MCF 10A (cell line): ENCODE measurements at regions of chr5 and their contacts with region 1.

Region 1: GRCh38 chr5:147635882-147636728 is 126.2 kb upstream of the DPYSL3 start:
- DNase-seq: no peak
- H3K4me3 Mint-ChIP-seq: no peak overlapping the region
- H3K27ac Mint-ChIP-seq: no peak overlapping the region
- H3K4me1 Mint-ChIP-seq: no peaks in the 10 kb centered on the region
- H3K27me3 Mint-ChIP-seq: no peaks in the 10 kb centered on the region
- CTCF ChIP-seq: no peak

Region 2: GRCh38 chr5:147658293-147658932 is 22.3 kb after region 1 on chr5:
- CTCF ChIA-PET with region 1: interaction called, 10 read pairs
- POLR2A ChIA-PET with region 1: no interaction called
- intact Hi-C with region 1: no loop called
- DNase-seq: no peak
- H3K4me3 Mint-ChIP-seq: no peak overlapping the region
- H3K27ac Mint-ChIP-seq: no peak overlapping the region
- H3K4me1 Mint-ChIP-seq: no peaks in the 10 kb centered on the region
- H3K27me3 Mint-ChIP-seq: peaks cover 19% of the 10 kb centered on the region
- CTCF ChIP-seq: no peak